ENCODE measurements at regions of chr6 and their contacts with region 1.

Region 1: GRCh38 chr6:11575408-11576033 is 38.0 kb downstream of the TMEM170B start:
- DNase-seq: no peak
- H3K4me3 ChIP-seq: peak overlapping the region in 1 of 8 donors; percentile 40
- H3K27ac ChIP-seq: peak overlapping the region in 2 of 8 donors; percentile 35 to 66
- H3K4me1 ChIP-seq: peaks cover 0 to 19% (median 2%) of the 10 kb centered on the region in 6 donors
- H3K27me3 ChIP-seq: no peaks in the 10 kb centered on the region
- CTCF ChIP-seq: peak; percentile 79 to 95 (median 85)
- POLR2A ChIP-seq: no peak

Region 2: DNA sequence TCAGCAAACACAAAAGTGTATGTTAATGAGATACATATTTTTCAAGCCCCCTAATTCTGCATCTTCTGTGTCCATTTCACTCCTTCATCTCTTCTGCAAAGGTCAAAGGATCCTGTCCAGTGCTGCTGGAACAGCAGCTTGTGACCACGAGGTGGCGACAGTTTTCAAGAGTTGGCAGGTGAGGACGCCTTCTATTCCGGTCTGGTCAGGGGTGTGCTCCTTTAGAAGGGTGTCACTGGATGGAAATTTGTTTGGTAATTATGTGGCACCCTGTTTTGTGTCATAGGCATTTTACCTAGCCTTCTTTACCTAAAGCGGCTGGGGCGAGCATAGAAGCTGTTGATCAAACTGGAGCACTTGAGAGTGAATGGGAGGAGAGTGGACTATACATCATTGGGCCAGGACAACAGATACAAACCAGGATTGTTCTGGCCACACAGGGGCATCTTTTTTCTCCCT is 431.1 kb before region 1 on chr6:
- intact Hi-C with region 1: loop called (anchors 10 kb)
- DNase-seq: peak; percentile 90
- H3K4me3 ChIP-seq: no peak overlapping the region
- H3K27ac ChIP-seq: peak overlapping the region in 1 of 8 donors; percentile 70
- H3K4me1 ChIP-seq: peaks cover 0 to 24% (median 5%) of the 10 kb centered on the region in 6 donors
- H3K27me3 ChIP-seq: no peaks in the 10 kb centered on the region
- CTCF ChIP-seq: peak; percentile 76 to 95 (median 92)
- POLR2A ChIP-seq: no peak

Measured in spleen (tissue), 13 donors.